ENCODE measurements at regions of chr5 and their contacts with region 1.

Region 1: DNA sequence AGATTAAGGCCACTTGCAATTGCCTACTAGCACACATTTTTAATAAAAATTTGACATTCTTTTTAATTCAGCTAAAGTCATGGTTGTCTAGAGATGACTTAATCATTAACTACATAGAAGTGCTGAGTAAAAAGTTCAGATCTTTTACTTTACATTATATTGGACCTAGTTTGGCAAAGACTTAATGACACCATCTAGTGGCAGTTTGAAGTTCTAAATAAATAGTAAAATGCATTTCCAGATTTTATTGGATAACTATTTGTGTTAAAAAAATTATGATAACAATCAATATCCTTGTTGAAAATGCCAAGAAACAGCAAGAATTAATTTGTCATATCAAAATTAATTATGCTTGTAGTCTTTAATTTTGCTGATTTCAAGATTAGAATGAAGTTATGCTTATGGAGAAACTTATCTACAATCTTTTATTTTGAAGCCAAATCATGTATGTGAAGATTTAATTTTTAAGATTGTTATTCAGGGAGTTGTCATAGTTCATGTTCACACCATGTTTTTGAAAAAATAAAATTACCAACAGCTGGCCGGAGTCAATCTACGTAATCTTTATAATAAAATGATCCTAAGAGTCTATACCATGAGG is 69.6 kb upstream of the PJA2 start:
- DNase-seq: no peak
- H3K4me3 Mint-ChIP-seq: no peak overlapping the region
- H3K27ac Mint-ChIP-seq: no peak overlapping the region
- H3K4me1 Mint-ChIP-seq: no peaks in the 10 kb centered on the region
- H3K27me3 Mint-ChIP-seq: peaks cover 10% of the 10 kb centered on the region

Region 2: DNA sequence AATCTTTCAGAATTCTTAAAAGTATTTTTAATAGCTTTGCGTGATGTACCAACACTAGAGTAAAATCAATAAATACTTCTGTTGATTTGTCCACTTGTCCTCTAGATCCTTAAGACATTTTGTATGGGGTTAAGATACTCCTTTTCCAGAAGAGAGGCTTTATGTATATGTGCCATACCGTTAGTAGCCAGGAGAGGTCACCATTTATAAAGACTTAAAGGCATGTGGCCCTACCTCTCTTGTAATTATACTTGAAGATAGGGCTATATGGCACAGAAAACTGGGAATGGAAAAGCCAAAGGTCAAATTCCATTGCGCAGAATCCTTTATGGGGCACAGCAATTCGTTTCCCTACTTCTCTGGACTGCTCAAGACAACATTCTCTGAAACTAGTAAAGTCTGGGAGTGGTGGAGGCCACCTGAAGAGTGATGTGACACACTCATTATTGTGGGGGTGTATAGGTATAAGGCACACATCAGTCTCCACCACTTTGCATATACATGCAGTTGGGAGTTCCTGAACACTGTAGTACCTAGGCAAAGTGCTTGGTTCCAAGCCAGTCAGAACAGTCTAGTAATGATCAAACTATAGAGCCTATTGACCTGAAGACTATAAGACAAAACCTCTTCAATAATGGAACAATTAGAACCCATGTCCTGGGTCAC is 957.4 kb before region 1 on chr5:
- intact Hi-C with region 1: loop called (anchors 10 kb)
- DNase-seq: no peak
- H3K4me3 Mint-ChIP-seq: no peak overlapping the region
- H3K27ac Mint-ChIP-seq: no peak overlapping the region
- H3K4me1 Mint-ChIP-seq: no peaks in the 10 kb centered on the region
- H3K27me3 Mint-ChIP-seq: peaks cover 4% of the 10 kb centered on the region

Region 3: GRCh38 chr5:108642167-108642906 is 837.0 kb before region 1 on chr5:
- intact Hi-C with region 1: loop called (anchors 10 kb)
- DNase-seq: peak; percentile 16
- H3K4me3 Mint-ChIP-seq: no peak overlapping the region
- H3K27ac Mint-ChIP-seq: no peak overlapping the region
- H3K4me1 Mint-ChIP-seq: peaks cover 1% of the 10 kb centered on the region
- H3K27me3 Mint-ChIP-seq: peaks cover 6% of the 10 kb centered on the region

Measured in activated T-helper 2 cell treated with anti-CD3 and anti-CD28 coated beads, Interferon-gamma antibody, Interleukin-2, Interleukin-4, amounts not matched to agents 10 μg/mL and 5 μg/mL and 100 μg/mL, durations not matched to agents 14 hours and 24 hours and 36 hours (primary cell).